Posterior vena cava (tissue), 2 donors: ENCODE measurements at regions of chr6 and their contacts with region 1.

Region 1: GRCh38 chr6:142692942-142693341 is 252.0 kb downstream of the HIVEP2 start:
- DNase-seq: peak; percentile 82

Region 2: GRCh38 chr6:142474531-142475289 is 218.2 kb before region 1 on chr6:
- intact Hi-C with region 1: no loop called
- DNase-seq: no peak

Region 3: DNA sequence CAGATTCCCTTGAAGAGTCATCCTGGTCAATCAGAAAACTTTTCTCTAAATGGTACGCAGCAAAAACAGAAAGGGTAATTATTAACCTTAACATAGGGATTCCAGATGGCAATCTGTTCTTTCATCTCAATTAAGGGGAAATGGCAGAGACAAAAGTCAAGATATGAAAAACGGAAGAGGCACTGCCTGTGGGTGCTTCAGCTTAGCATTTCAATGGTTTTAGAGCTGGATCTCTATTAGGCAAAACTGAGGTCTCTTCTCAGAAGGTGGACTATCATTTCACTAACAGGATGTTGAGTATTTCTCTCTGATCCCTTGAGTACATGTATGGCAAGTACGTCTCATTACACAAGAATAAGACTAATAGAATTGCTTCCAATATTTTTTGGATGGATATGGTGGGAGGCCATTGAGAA is 44.9 kb before region 1 on chr6:
- intact Hi-C with region 1: no loop called
- DNase-seq: no peak

Region 4: DNA sequence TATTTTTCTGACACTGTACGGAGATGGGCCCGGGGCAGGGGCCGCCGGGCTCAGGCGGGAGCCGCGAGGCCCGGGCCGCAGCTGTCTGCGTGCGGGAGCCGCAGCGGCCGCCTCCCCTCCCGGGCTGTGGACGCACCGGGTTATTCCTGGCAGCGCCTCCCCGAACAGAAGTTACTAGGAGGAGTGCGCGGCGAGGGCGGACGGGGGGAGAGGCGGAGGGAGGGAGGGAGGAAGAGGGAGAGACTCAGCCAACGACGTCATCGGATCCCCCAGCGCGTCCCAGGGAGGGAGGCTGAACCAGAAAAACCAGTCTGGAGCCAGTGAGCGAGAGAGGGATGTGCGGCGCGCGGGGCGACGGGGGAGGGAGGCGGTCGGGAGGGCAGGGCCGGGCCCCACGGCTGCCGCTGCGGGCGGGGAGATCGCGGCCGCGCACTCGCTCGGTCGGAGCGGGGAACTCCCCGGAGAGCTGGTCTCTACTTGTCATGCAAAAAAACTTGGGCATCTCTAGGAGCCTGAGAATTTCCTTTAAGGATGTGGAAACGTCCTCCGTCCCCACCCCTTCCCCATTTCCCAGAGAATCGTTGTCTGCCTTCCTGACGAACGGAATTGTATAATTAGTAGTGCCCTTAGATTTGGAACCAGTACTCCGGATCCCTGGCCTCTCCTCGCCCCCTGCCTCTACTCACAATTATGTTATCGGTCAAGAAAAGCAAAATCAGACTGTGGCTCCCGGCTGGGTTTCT is 253.4 kb after region 1 on chr6:
- intact Hi-C with region 1: loop called (anchors 5 to 10 kb)
- DNase-seq: peak; percentile 99

Region 5: GRCh38 chr6:143026696-143027449 is 333.9 kb after region 1 on chr6:
- intact Hi-C with region 1: loop called in 1 of 2 experiments (anchors 10 kb)
- DNase-seq: no peak

Region 6: DNA sequence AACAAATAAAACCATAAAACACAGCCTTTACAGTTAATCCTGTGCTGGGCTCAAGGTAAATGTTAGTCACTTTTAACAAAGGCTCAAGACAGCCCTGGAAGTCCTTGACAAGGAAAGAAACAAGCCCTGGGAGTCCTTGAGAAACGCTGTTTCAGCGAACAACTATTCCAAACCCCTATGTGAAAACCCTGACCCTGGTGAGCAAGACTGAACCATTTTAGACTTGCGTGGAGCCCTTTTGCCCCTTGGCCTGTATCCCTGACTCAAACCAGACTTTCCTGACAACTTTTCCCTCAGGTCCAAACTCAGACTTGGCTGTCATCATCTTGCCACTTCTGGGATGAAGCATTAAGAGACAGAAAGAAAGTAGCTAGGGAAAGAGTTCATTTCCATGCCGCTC is 548.2 kb after region 1 on chr6:
- intact Hi-C with region 1: loop called in 1 of 2 experiments (anchors 5 kb)
- DNase-seq: no peak

Region 7: DNA sequence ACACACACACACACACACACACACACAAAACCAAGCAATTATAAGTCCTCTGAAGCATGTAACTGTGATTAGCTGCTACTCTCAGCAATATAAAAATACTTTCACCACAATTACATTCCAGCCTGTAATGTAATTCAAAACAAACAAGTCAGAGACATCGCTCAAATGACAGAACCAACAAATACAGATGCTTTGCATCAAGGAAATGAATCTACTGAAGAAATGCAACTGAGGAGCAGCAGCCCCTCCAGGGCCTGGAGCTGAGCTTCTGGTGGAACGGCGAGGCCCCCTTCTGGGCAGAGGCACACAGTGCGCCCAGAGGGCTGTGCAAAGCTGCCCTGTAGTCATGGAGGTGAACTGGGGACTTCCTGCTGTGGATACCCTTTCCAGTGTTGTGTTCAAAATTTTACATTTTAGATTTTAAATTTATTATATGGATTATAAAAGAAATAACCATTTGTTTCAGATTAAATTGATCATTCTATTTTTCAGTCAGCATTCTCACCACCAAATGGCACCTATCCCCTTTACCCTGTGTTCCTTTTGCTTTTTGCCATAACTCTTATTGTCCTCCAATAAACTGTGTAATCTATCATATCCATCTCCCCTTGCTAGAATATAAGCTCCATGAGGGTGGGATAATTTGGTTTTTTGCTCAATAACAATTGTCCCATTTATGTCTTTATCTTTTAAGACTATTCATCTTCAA is 734.3 kb after region 1 on chr6:
- intact Hi-C with region 1: loop called (anchors 5 to 10 kb)
- DNase-seq: peak; percentile 90

Region 8: DNA sequence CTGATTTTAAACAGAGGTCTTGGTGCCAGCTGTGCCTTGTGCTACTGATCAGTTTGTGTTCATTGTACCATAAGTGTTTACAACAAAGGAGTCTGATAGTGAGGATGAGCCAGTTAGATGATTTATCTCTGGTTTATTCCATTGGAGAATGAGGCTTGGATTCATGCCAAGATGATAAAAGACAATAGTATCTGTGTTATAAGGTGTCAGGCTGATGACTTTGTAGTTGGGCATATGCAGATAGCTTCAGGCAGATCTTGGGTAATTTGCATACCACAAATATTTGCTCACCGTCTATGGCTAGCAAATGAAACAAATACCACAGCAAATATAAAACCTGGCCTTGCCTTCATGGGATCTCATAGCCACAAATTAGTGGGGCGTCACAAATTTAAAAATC is 941.6 kb after region 1 on chr6:
- intact Hi-C with region 1: no loop called
- DNase-seq: no peak